ENCODE measurements at regions of chr1 and their contacts with region 1.

Region 1: DNA sequence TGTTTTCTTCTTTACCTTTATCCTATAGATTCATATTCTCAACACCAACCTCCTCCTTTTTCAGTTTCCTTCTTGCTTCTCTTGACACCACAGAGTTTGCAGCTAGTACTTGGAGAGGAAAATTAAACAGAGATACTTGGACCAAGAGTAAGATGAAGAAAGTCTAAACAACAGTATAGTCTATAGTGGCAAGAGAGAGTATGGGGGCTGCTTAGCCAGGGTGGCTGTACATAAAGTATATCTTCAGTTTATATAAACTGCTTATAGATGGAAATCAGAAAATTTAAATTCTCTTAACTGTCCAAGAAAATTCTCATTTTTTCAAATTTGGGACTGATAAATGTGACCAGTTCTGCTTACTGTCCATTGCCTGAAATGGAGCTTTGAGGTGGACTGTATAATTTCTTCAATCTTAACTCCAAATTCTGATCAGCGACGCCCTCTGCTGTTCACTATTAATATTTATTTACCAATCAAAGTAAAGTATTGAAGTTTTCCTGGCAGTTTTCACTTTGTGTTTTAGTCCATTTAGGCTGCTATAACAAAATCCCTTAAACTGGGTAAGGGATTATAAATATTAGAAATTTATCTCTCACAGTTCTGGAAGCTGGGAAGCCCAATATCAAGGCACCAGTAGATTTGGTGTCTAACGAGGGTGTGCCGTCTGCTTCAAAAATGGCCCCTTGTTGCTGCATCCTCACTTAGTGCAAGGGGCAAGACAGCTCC is 14.8 kb upstream of the METTL18 start:
- DNase-seq: no peak
- ATAC-seq: no peak

Region 2: DNA sequence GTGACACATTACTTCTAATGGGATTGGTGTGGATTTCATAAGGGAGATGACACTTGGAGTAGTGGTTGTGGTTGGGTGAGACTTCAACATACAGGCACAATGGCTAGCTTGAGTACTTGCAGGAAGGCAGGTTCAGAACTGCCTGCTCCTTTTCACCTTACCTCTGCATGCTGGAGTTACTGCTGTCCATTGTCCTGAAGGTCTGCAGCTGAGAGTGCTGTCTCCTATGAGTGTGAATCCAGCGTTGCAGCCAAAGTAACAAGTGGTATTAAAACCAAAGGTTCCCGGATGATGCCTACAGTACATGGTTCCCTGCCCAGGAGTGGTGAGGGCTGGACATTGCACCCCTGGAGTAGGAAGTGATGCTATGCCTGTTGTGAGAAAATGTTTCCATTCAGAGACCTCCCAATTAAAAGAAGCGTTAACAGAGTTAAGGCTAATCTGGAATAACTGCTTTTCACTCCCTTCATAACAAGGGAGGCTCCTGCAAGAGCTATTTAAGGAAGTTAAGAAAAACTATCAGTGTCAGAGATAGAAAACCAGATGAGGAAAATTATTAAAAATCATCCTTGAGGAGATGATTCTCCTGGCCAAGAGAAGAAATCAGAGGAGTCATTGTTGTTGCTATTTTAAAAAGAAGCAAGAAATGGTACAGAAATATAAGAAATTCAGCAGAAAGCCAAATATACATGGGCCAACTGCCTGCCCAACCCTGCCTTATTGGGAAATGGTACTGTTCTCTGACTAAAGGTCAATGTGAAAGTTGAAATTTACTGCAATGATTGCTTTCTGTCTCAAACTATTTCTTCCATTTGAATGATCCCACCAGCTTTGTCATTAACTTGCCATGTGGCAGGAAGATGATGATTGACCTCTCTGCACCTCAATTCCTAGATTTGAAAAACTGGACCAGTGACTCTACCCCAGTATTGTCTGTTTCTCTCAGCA is 213.5 kb before region 1 on chr1:
- intact Hi-C with region 1: loop called (anchors 10 kb)
- DNase-seq: no peak
- ATAC-seq: peak; percentile 48